Dorsolateral prefrontal cortex (tissue), 120 donors: ENCODE measurements at regions of chr14 and their contacts with region 1.

Region 1: DNA sequence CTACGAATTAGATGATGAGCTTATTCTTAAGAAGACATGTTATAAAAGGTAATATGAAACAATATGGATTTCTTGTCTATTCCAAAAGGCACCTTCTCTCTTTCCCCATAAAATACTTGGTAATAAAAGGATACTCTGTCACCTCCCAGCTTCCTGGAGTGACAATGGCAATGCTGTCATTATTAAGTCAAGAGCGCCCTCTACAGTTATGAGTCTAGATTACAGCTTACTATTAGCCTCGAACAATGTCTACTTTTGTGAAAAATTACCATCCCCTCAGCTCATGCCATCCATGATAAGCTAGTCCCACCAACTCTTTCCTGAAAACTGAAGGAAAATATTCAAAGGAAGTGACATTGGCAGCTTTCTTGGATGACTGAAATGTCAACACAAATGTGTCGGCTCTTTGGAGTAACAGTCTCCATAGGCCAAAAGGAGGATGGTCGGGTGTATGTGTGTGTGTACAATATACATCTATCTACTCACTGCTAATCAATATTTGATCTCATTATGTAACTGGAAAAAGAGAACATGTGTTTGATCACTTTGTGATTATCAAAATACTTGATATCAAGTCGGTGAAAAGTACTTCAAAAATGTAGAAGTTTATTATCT is 48.7 kb upstream of the CDKN3 start:
- DNase-seq: peak in 1 of 10 donors; percentile 14
- H3K4me3 ChIP-seq: no peak overlapping the region
- H3K27ac ChIP-seq: peak overlapping the region in 5 of 59 donors; percentile 45 to 81 (median 63)
- H3K27me3 ChIP-seq: no peaks in the 10 kb centered on the region
- CTCF ChIP-seq: peak; percentile 60 to 94 (median 84)

Region 2: DNA sequence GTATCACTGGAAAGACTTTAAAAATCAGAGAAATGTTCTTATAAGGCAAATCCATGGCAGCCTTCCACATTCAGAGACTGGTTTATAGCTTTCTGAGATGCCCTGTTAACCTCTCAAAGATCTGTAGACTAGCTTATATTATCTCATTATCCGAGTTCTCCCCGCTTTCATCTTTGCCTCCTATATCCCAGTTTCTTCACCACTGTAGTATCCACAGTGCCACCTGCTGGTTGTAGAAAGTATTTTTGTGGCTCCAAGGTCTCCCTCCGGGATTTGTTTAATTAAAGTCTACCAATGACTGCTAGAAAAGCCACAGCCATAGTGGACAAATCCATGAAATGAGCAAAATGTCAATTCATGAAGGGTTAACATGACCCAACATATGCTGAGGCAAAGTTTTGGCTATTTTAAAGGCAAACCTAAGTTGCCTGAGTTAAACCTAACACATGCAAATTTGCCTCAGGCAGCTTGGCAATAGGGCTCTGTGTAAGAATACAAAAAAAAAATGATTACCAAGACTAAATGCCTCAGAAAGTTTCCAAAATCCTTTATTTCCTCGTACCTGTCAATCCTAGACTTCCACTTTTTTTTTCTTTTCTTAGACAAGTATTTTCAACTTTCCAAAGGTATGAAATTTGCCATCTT is 172.7 kb before region 1 on chr14:
- intact Hi-C with region 1: loop called in 1 of 2 experiments (anchors 5 kb)
- DNase-seq: peak in 6 of 10 donors; percentile 44 to 74 (median 60)
- H3K4me3 ChIP-seq: no peak overlapping the region
- H3K27ac ChIP-seq: no peak overlapping the region
- H3K27me3 ChIP-seq: no peaks in the 10 kb centered on the region
- CTCF ChIP-seq: peak; percentile 77 to 97 (median 89)